PC-9 (cell line): ENCODE measurements at regions of chr10 and their contacts with region 1.

Region 1: DNA sequence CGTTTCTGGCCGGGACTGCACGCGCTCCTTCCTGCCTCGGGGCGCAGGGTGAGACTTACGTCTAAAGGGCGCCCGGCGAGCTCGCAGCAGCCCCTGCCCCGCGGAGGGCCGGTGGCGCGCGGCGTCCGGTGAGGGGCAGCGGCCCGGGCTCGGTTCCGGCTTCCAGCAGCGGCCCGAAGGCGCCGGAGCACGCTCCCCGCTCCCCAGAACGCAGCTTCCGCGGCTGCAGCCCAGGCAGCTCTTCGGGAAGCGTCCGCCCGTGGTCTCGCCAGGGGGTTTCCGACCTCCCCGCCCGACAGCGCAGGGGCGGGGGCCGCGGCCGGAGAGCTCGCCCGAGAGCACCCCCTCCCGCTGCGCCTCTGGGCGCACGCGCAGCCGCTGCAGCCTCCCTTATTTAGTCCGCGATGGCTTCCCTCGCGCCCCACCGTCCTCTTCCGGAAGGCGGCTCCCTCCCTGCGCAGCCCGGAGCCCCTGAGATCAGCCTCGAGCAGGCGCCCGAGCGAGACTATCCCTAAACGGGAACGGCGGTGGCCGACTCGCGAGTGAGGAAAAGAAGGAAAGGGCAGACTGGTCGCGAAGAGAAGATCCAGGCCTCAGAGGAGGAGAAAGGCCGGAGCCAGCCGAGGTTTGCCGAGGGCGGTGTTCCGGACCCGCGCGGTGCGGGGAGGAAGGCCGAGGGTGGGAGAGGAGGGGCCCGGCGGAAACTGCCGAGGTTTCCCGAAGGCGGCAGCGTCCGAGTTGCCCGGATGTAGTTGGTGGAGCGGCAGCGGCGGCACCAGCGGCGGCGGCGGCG is at the start of gene WAC:
- DNase-seq: peak; percentile 60 to 96
- H3K4me3 ChIP-seq: peak within 1 kb of the TSS; percentile 93
- H3K27ac ChIP-seq: peak within 1 kb of the TSS; percentile 96
- H3K4me1 ChIP-seq: peaks cover 18% of the 10 kb centered on the region
- H3K27me3 ChIP-seq: no peaks in the 10 kb centered on the region
- CTCF ChIP-seq: no peak; the same call in 1 of the 2 replicates
- total RNA-seq, gene WAC: 67.1 and 93.9 TPM in 2 replicates

Region 2: GRCh38 chr10:28432210-28432676 is 100.3 kb before region 1 on chr10:
- CTCF ChIA-PET with region 1: no interaction called
- POLR2A ChIA-PET with region 1: no interaction called
- intact Hi-C with region 1: loop called (anchors 2 kb)
- DNase-seq: peak; percentile 45 to 58
- H3K4me3 ChIP-seq: no peak overlapping the region
- H3K27ac ChIP-seq: no peak overlapping the region
- H3K4me1 ChIP-seq: no peaks in the 10 kb centered on the region
- H3K27me3 ChIP-seq: no peaks in the 10 kb centered on the region
- CTCF ChIP-seq: peak; percentile 75

Region 3: DNA sequence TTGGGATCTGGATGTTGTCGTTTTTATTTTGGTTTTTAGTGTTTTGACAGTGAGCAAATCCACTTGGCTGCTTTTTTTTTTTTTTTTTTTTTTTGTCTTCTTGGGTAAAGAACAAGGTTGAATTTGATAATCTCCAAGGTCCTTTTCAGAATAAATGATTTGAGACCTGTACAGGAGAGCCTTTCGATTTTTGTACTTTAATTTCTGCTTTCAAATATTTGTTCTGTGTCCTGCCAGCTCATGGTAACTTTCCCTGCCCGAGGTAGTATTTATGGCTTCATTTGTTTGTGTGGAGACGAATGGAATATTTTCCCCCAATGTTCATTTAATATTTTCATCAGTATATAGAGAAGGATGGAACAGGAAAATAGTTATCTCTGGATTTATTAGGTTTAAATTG is 20.2 kb after region 1 on chr10:
- CTCF ChIA-PET with region 1: no interaction called
- POLR2A ChIA-PET with region 1: no interaction called
- intact Hi-C with region 1: loop called (anchors 2 kb)
- DNase-seq: no peak
- H3K4me3 ChIP-seq: no peak overlapping the region
- H3K27ac ChIP-seq: no peak overlapping the region
- H3K4me1 ChIP-seq: no peaks in the 10 kb centered on the region
- H3K27me3 ChIP-seq: no peaks in the 10 kb centered on the region
- CTCF ChIP-seq: no peak

Region 4: DNA sequence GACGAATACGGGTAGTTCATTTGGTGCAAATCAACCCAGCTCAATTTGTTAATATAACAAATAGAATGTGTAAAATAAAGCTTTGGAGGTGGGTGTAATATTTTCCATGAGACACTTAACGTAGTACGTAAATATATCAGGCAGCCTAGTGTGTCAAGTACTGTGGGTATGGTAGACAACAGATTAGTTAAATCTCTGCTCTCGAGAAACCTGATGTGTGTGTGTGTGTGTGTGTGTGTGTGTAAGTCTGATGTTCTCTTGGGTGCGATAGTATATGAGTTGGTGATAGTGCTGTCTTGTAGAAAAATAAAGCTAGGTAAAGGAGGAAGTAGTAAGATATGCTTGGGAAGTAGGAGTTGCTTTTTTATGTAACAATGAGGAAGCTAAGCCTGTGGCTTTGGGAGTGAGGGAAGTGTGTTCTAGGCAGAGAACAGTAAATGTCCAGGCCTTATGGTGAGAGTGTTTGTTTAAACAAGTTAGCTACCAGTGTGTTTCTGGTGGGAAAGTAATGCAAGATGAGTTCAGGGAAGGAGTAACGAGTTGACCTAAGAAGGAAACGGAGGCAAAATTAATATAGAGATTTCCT is 26.4 kb after region 1 on chr10:
- CTCF ChIA-PET with region 1: no interaction called
- POLR2A ChIA-PET with region 1: interaction called, 15 read pairs
- intact Hi-C with region 1: no loop called
- DNase-seq: no peak
- H3K4me3 ChIP-seq: no peak overlapping the region
- H3K27ac ChIP-seq: no peak overlapping the region
- H3K4me1 ChIP-seq: no peaks in the 10 kb centered on the region
- H3K27me3 ChIP-seq: no peaks in the 10 kb centered on the region
- CTCF ChIP-seq: no peak